ENCODE measurements at regions of chr14 and their contacts with region 1.

Region 1: DNA sequence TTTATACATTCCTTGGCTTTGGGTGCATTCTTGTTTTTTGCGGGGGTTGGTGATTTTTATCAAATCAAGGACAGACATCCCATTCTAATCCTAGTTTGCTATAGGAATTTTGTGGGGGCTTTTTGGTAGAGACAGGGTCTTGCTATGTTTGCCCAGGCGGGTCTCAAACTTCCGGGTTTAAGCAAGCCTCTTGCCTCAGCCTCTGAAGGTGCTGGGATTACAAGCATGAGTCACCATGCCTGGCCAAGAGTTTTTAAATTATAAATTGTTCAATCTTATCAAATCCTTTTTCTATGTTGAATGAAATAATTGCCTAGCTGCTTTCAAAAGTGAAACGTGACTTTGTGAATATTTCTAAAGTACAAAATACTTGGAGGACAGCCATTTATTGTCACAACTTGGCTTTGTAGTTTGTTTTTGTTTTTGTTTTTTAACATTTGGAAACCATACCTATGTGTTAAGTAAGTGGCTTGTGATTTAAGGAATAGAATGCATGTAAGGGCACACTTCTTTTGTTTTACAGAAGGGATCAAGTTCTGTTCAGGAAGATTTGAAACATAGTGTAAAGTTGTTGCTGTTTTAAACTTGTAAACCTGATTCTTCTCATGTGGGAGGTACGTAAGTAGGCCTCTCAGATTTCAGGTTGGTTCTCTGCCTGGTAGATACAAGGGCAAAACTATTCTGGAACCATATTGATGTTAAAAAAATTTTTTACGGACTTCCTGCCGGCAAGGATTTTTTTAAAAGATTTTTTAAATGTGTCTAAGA is 13.4 kb downstream of the MARK3 start:
- DNase-seq: peak in 3 of 7 donors; percentile 48 to 61 (median 51)
- H3K4me3 ChIP-seq: peak overlapping the region in 1 of 4 donors; percentile 5
- H3K27ac ChIP-seq: peak overlapping the region; percentile 3 to 73 (median 52)
- H3K4me1 ChIP-seq: peaks cover 66 to 86% of the 10 kb centered on the region in 2 donors
- H3K27me3 ChIP-seq: no peaks in the 10 kb centered on the region
- CTCF ChIP-seq: no peak
- POLR2A ChIP-seq: no peak

Region 2: GRCh38 chr14:103444837-103445524 is 46.4 kb after region 1 on chr14:
- intact Hi-C with region 1: loop called in 1 of 2 experiments (anchors 5 kb)
- DNase-seq: peak in 1 of 7 donors; percentile 24
- H3K4me3 ChIP-seq: no peak overlapping the region
- H3K27ac ChIP-seq: peak overlapping the region in 1 of 5 donors; percentile 15
- H3K4me1 ChIP-seq: peaks cover 9 to 49% of the 10 kb centered on the region in 2 donors
- H3K27me3 ChIP-seq: no peaks in the 10 kb centered on the region
- CTCF ChIP-seq: no peak
- POLR2A ChIP-seq: no peak

Region 3: DNA sequence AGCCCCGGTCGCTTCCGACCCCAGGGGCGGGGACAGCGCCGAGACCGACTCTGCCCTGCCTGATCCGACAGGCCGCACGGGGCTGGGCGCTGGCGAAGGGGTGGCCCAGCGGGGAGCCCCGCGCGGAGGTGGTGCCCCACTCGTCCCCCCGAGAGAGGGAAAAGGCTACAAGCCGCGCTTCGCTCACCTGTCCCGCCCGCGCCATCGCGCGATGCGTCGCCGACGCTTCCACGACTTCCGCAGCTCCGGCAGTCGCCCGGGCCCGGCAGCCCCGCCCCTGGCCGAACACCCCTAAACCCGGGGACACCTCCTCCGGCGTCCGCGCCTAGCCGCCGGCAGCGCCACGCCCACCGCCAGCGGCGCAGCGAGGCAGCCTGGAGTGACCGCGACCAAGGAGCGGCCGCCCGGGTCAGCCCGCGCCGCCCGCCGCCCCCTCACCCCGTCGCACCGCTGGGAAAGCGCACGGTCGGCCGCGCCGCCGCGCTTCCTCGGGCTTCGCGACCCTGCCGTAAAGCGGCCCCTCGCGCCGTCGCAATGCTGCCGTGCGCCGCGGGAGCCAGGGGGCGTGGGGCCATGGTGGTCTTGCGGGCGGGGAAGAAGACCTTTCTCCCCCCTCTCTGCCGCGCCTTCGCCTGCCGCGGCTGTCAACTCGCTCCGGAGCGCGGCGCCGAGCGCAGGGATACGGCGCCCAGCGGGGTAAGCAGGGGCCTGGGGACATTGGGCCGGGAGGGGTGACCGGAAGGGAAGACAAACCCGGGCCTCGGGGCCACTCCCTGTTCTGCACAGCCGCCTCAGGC is 164.0 kb after region 1 on chr14 and contains the starts of genes BAG5 and COA8:
- intact Hi-C with region 1: no loop called
- DNase-seq: peak; percentile 78 to 85 (median 82)
- H3K4me3 ChIP-seq: peak within 1 kb of the TSS; percentile 30 to 91 (median 87)
- H3K27ac ChIP-seq: peak within 1 kb of the TSS; percentile 37 to 97 (median 94)
- H3K4me1 ChIP-seq: peaks cover 18 to 50% of the 10 kb centered on the region in 2 donors
- H3K27me3 ChIP-seq: no peaks in the 10 kb centered on the region
- CTCF ChIP-seq: peak in 1 of 6 experiments; percentile 32
- POLR2A ChIP-seq: peak; percentile 60 to 70
- total RNA-seq, gene BAG5: 16.7 to 33.5 (median 24.8) TPM
- total RNA-seq, gene COA8: 4.9 to 49.2 (median 32.0) TPM